ENCODE measurements at regions of chr19 and their contacts with region 1.

Region 1: DNA sequence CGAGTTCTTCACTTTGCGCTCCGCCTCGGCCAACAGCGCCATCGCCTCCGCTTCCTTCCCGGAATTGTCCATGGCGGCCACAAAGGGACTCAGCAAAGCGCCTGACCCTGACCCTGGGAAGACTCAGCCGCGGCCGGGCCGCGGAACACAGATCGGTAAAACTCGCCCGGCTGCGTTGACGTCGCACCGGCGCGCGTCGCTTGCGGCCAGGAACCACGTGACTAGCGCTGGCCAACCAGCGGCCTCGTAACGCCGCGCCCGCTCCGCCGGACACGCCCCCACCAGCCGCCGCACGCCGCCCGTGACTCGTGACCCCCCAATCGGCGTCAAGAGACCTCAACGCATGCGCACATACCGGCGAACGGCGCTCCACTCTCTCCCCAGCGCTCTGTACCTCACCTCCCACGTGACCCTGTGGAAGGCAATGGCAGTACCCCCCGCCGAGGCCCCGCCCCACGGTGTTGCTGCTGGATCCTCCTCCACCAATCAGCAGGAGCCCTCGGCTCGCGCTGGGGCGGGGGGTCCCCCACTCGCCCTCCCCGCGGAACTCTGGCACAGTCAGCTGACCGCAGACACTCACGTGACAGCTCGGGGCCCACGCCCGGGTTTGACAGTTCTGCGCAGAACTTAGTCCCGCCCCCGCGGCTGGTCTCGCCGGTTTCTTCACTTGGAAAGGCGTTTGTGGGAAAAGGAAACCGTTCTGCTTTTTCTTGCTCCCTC is at the start of gene NAPA:
- DNase-seq: peak; percentile 98
- H3K4me3 ChIP-seq: peak within 1 kb of the TSS; percentile 100
- CTCF ChIP-seq: peak; percentile 82

Region 2: GRCh38 chr19:47210689-47211316 is 304.2 kb before region 1 on chr19:
- CTCF ChIA-PET with region 1: no interaction called
- POLR2A ChIA-PET with region 1: no interaction called
- DNase-seq: no peak
- H3K4me3 ChIP-seq: no peak overlapping the region
- CTCF ChIP-seq: peak; percentile 70

Region 3: DNA sequence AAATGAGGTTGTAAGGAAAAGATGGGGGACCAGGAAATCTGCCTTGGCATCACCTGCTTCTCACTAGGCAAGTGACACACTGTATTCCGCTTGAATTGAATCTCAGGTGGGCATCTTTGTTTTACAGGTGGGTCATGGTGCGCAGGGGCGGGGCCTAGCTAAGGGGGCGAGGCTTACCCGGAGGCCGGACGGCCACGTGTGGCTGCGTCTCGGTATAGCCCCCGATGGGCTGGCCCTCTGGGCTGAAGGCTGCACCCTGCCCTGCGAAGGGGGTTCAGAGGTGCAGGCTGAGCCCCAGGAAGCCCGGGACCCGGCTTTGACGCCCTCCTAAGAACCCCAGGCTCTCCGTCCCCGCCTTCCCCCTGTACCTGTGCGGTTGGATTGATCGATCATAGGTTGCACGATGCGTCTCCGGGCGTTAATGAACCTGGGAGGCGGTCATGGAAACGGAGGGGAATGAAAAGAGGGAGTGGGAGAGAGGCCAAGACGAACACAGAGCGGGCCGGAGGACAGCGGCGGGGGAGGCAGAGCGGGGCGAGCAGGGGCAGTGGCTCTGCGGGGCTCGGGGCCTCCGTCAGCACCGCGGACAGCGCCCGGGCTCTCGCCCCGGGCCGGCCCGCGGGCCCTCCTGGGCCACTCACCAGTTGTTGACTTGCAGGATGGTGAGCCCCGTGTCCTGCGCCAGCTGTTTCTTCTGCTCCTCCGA is 108.2 kb before region 1 on chr19:
- CTCF ChIA-PET with region 1: no interaction called
- POLR2A ChIA-PET with region 1: no interaction called
- DNase-seq: no peak
- H3K4me3 ChIP-seq: no peak overlapping the region
- CTCF ChIP-seq: no peak

Region 4: GRCh38 chr19:47428177-47428894 is 86.7 kb before region 1 on chr19:
- CTCF ChIA-PET with region 1: interaction called, 11 read pairs
- POLR2A ChIA-PET with region 1: no interaction called
- DNase-seq: peak; percentile 75
- H3K4me3 ChIP-seq: peak overlapping the region; percentile 51
- CTCF ChIP-seq: no peak

Region 5: GRCh38 chr19:47483800-47484690 is 31.0 kb before region 1 on chr19 and contains the start of gene KPTN:
- CTCF ChIA-PET with region 1: interaction called, 33 read pairs
- POLR2A ChIA-PET with region 1: interaction called, 4 read pairs
- DNase-seq: peak; percentile 58
- H3K4me3 ChIP-seq: peak within 1 kb of the TSS; percentile 74
- CTCF ChIP-seq: peak; percentile 99

Region 6: DNA sequence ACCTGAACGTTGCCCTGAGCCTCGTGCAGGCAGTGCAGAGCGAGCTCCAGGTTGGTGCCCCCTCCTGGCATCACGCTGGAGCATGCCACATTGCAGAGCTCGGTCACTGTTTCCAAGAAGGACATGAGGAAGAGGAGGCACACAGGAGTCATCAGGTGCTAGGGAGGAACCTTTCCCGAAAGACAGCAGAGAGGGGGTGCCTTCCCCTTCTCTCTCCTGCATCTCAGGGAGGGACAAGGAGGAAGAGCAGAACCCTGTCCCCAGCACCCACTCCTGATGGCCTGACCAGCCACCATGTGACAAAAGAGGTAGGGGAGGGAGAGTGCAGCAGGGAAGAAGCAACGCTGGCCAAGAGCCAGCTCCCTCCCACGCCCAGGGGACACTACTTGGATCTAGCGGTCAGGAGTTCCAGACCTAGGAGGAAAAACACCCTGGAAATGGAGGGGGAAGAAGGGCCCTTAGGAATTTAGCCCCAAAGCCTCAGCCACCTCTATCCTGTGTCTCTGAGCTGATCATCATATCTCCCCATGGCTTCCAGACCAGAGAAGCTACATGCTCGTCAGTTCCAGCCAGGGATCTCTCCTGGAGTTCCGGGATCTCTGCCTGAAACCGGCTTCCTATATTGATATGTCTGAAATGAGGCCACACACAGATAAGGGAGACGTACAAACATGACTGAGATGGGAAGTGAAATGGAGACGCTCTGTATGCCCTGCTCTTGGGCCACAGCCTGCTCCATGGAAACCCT is 16.8 kb after region 1 on chr19:
- CTCF ChIA-PET with region 1: interaction called, 18 read pairs
- POLR2A ChIA-PET with region 1: no interaction called
- DNase-seq: no peak
- H3K4me3 ChIP-seq: no peak overlapping the region
- CTCF ChIP-seq: no peak

Region 7: GRCh38 chr19:47598407-47599349 is 83.6 kb after region 1 on chr19:
- CTCF ChIA-PET with region 1: interaction called, 17 read pairs
- POLR2A ChIA-PET with region 1: no interaction called
- DNase-seq: peak; percentile 87
- H3K4me3 ChIP-seq: peak overlapping the region; percentile 55
- CTCF ChIP-seq: no peak

Region 8: GRCh38 chr19:47627846-47628771 is 113.1 kb after region 1 on chr19:
- CTCF ChIA-PET with region 1: no interaction called
- POLR2A ChIA-PET with region 1: no interaction called
- DNase-seq: no peak
- H3K4me3 ChIP-seq: no peak overlapping the region
- CTCF ChIP-seq: no peak

Region 9: GRCh38 chr19:47707135-47707925 is 192.3 kb after region 1 on chr19:
- CTCF ChIA-PET with region 1: interaction called, 12 read pairs
- POLR2A ChIA-PET with region 1: no interaction called
- DNase-seq: no peak
- H3K4me3 ChIP-seq: no peak overlapping the region
- CTCF ChIP-seq: peak; percentile 94